Astrocyte of the cerebellum (primary cell): ENCODE measurements at regions of chr1 and their contacts with region 1.

Region 1: DNA sequence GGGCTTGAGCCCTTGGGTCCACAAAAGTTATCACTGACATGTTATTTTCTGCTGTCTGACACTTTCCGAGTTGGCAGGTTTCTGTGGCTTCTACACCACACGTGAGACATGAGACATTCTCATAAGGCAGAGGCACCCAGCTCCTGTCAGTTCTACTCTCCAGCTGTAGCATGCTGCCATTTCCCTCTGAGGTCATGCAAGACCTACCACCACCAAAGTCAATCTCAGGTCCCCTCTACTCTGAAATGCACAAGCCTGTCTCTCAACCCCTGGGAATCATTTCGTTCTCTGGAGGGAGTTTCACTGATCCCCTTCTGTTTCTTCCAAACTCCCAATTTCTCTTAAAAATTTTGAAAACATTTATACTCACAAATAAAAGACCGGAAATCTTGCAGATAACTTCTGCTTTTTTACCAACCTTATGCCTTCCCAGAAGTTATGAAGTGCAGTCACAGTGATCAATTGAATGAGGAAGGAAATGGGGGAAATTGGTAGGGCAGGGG is 39.5 kb upstream of the CR2 start:
- DNase-seq: no peak
- H3K4me3 ChIP-seq: no peak overlapping the region
- CTCF ChIP-seq: no peak

Region 2: DNA sequence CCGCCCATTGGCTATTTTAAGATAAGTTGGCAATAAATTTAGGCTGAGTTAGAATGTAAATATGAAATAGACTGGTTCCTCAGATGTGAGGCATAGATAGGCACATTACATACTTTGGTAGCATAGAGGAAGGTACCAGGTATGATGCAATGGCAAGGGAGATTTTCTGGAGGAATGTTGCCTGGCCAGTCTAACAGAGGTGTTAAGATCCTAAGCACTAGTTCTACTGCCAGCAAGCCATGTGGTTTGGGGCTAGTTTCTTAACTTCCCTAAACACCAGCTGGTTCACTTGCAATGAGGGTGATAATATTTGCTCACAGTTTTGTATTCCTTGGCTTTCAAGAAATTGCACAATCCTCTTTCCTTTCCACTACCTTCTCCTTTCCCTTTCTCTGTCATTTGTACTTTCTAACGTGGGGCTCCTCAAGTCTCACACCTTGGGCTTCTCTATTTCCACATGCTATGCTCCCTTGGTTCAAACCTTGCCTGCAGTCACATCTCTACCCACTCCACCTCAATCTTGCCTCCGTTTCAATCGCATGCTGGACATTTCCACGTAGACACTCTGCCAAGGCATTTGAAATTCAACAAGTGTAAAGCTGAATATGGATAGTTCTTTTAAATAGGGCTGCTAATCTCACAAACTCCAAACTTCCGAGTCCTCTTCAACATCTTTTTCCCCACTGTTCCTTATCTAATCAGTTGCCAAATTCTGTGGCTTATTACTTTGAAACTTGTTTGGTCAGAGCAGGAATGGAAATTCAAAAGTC is 97.8 kb before region 1 on chr1:
- in situ Hi-C with region 1: loop called (anchors 5 kb)
- DNase-seq: no peak
- H3K4me3 ChIP-seq: no peak overlapping the region
- CTCF ChIP-seq: no peak

Region 3: DNA sequence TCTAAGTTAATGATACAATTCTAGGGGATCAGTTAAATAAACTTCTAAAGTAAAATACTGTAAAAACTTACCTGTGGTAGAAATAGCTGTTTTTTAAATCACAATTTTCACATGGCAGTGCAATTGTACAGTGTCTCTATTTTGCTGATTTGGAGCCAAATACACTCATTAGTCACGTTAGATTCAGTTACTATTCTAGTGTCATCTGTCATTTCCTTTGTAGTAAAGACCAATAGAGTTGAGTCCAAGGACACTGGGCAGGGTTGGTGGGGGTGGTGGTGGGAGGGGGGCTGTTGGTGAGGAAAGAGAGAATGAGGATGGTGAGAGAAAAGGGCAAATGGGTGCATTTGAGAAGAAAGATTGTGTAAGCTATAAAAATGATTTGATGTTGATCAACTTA is 59.6 kb before region 1 on chr1:
- in situ Hi-C with region 1: no loop called
- DNase-seq: no peak
- H3K4me3 ChIP-seq: no peak overlapping the region
- CTCF ChIP-seq: no peak

Region 4: DNA sequence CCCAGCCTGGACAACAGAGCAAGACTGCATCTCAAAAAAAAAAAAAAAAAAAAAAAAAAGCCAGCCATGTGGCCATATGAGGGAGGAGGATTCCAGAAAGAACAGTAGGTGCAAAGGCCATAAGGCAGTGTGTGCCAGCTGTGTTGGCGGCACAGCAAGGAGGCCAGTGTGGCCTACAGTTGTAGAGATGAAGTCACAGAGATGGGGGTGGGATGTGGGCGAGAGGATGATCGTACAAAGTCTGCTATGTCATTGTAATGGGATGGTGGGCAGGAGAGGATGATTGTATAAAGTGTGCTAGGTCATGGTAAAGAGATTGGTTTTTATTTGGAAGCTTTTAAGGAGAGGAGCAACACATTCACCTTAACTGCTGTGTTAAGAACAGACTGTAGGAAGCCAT is 71.5 kb after region 1 on chr1:
- in situ Hi-C with region 1: no loop called
- DNase-seq: no peak
- H3K4me3 ChIP-seq: no peak overlapping the region
- CTCF ChIP-seq: no peak